ENCODE measurements at regions of chr17 and their contacts with region 1.

Region 1: DNA sequence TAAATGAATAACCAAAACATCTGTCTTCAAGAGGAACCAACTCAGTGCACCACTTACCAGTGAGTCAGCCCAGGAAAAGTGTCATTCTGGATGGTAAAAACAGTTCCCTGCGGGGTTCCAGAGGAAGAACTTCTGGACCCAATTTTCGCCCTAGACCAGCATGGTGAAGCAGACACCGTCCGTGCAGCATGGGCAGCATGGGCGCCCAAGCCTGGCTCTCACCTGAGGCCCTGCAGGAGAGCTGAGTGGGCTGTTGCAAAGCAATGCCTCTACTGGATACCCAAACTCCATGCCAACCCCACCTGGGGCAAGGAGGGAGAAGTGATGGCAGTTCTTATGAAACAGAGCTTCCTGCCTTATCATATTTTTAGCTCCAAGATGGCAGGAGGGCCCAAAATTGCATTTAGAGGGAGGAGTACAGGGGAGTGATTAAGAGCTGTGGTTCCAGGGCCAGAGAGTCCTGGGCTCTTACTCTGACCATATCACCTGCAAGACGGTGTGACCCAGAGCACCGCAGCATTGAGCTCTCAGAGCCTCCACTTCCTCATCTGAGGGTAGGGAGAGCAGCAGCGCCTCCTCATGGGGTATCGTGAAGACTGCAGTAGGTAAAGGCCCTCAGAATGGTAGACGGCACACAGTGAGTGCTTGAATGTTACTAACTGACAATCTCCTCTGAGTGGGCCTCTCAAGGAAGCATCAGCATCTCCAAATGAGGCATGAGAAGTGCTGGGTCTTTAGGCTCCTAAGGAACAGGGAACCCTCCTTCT is 16.6 kb upstream of the INPP5K start:
- DNase-seq: no peak
- H3K4me3 Mint-ChIP-seq: no peak overlapping the region
- H3K27ac Mint-ChIP-seq: no peak overlapping the region
- H3K4me1 Mint-ChIP-seq: peaks cover 12% of the 10 kb centered on the region
- H3K27me3 Mint-ChIP-seq: no peaks in the 10 kb centered on the region
- CTCF ChIP-seq: no peak

Region 2: DNA sequence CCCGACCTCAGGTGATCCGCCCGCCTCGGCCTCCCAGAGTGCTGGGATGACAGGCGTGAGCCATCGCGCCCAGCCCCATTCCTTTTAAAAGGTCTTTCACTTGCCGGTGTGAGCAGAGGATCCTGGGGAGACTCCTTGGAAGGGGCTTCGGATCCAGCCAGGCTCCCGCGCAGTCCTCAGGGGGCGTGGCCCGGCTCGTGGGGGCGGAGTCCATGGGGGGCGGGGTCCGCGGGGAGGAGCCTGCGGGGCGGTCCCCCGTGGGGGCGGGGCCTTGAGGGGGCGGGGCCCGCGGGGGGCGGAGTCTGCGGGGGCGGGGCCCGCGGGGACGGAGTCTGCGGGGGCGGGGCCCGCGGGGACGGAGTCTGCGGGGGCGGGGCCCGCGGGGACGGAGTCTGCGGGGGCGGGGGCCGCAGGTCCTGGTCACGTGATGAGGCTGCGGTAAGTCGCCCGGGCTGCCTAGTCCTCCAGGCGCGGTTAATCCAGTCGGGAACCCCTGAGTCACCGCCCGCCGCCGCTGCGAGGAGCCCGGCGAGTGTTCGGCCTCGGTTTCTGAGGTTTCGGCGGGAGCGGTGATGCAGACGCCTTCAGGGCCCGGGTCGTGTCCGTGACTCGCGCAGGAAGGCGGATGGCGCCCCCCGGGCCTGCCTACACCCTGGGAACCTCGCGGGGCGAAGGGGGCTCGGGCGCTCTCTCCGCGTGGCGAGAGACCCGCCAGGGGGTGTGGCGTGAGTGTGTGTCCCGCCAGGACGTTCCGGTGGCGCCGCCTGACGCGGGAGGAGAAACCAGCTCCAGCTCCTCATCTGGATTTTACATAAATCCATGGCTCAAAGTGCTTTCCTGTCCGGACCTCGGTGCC is 329.7 kb before region 1 on chr17:
- CTCF ChIA-PET with region 1: interaction called, 12 read pairs
- intact Hi-C with region 1: no loop called
- DNase-seq: no peak
- H3K4me3 Mint-ChIP-seq: no peak overlapping the region
- H3K27ac Mint-ChIP-seq: no peak overlapping the region
- H3K4me1 Mint-ChIP-seq: no peaks in the 10 kb centered on the region
- H3K27me3 Mint-ChIP-seq: no peaks in the 10 kb centered on the region
- CTCF ChIP-seq: no peak

Measured in Calu3 (cell line).